ENCODE measurements at regions of chr1 and their contacts with region 1.

Region 1: DNA sequence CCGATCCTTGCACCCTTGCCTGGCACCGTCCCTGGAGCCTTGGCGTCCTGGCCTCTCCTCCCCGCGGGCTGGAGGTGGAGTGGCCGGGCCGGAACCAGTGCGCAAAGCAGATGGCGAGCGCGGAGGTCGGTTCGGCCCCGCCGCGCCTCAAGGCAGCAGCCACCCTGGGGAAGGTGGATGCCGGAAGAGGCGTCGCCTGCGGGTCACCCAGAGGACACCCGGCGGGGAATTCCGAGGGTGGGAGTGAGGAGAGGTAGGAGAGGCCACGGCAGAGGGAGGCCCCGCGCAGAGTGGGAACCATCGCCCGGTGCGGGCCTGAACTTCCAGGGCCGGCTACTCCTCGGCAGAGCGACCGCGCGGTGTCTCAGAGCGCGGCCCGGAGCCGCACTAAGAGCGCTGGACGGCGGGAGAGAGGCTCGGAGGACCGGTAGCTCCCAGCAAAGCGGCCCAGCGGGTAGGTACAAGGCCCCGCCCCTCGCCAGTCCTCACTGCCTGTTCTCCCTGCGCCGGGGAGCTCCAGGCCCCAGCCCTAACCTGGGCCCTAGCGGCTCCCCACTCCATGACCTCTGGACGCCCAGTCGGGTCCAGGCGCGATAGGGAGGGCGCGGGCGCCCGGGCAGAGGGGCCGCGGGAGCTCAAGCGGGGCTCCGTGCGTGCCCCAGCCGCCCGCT is at the start of gene RNF207:
- DNase-seq: peak; percentile 82 to 85
- ATAC-seq: peak; percentile 77 to 88
- H3K4me3 ChIP-seq: peak within 1 kb of the TSS; percentile 93
- H3K27ac ChIP-seq: peak within 1 kb of the TSS; percentile 99 to 100
- H3K4me1 ChIP-seq: peaks cover 9% of the 10 kb centered on the region
- CTCF ChIP-seq: no peak
- EP300 ChIP-seq: no peak
- POLR2A ChIP-seq: peak; percentile 75
- RAD21 ChIP-seq: no peak
- polyA plus RNA-seq, gene RNF207: 11.3 and 17.9 TPM in 2 replicates

Region 2: DNA sequence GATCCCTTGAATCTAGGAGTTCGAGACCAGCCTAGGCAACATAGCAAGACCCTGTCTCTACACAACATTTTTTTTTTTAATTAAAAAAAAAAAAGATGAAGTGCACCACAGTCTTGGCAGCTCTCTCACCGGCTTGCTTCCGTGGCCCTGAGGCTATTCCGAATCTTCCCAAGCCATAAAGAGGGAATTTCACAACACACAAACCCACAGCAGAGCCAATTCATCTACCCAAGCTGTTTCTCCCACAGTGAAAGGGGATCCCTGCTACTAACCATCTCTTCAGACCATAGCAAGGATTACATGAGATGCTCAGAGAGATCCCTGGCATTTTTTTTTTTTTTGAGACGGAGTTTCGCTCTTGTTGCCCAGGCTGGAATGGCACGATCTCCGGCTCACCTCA is 17.5 kb before region 1 on chr1:
- CTCF ChIA-PET with region 1: interaction called, 26 read pairs
- POLR2A ChIA-PET with region 1: interaction called, 5 read pairs
- DNase-seq: no peak
- ATAC-seq: no peak
- H3K4me3 ChIP-seq: no peak overlapping the region
- H3K27ac ChIP-seq: no peak overlapping the region
- H3K4me1 ChIP-seq: peaks cover 6% of the 10 kb centered on the region; the same call in 2 of the 3 replicates
- CTCF ChIP-seq: no peak
- EP300 ChIP-seq: no peak
- POLR2A ChIP-seq: no peak
- RAD21 ChIP-seq: no peak

Region 3: DNA sequence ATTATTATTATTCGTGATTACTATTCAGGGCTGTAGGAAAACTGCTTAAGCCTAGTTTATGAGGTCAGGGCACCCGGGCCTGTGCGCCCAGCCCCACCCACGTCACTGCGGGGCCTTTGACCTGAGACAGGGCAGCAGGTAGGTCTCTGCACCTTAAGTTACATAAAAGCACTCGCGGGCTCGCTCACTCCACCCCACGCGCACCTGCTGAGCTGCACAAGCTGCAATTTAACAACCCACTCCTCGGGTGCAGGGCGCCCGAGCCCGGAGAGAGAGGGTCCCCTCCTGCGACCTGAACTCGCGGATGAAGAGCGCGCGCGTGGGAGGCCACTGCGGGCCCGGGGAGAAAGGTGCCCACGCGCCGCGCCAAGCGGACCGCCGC is 29.3 kb after region 1 on chr1:
- CTCF ChIA-PET with region 1: interaction called, 21 read pairs
- POLR2A ChIA-PET with region 1: interaction called, 9 read pairs
- DNase-seq: no peak
- ATAC-seq: no peak
- H3K4me3 ChIP-seq: peak overlapping the region; percentile 100
- H3K27ac ChIP-seq: peak overlapping the region; percentile 99
- H3K4me1 ChIP-seq: peaks cover 7% of the 10 kb centered on the region; the same call in 1 of the 3 replicates
- CTCF ChIP-seq: no peak
- EP300 ChIP-seq: no peak
- POLR2A ChIP-seq: no peak
- RAD21 ChIP-seq: no peak